Aorta (tissue), 5 donors: ENCODE measurements at regions of chr1 and their contacts with region 1.

Region 1: GRCh38 chr1:222634180-222635013 is 16.5 kb downstream of the MIA3 start:
- DNase-seq: no peak
- ATAC-seq: peak; percentile 74
- H3K4me3 ChIP-seq: no peak overlapping the region
- H3K27ac ChIP-seq: no peak overlapping the region
- H3K4me1 ChIP-seq: no peaks in the 10 kb centered on the region
- H3K27me3 ChIP-seq: no peaks in the 10 kb centered on the region

Region 2: DNA sequence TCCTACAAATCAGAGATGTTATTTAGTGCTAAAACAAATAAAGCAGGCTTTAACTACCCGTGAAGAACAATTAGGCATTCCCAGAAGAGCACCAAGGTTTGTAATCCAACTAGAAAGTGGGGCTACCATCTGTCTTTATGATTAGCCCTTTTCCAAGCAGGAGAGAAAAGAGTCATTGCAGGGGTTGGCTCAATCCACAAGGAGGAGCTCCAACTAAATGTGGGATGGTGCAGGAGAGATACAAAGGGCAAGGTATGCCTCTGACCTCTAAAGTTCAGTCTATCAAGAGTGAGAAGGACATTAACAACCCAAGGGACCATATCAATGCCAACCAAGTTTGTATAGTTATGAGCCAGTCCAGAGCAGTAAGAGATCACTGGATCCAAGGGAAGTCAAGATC is 509.8 kb before region 1 on chr1:
- intact Hi-C with region 1: no loop called
- DNase-seq: no peak
- ATAC-seq: no peak
- H3K4me3 ChIP-seq: no peak overlapping the region
- H3K27ac ChIP-seq: no peak overlapping the region
- H3K4me1 ChIP-seq: no peaks in the 10 kb centered on the region
- H3K27me3 ChIP-seq: no peaks in the 10 kb centered on the region

Region 3: GRCh38 chr1:222465211-222466041 is 169.0 kb before region 1 on chr1:
- intact Hi-C with region 1: loop called (anchors 1 to 2 kb)
- DNase-seq: peak; percentile 97
- ATAC-seq: peak; percentile 100
- H3K4me3 ChIP-seq: peak overlapping the region in 1 of 2 donors; percentile 29
- H3K27ac ChIP-seq: peak overlapping the region in 1 of 2 donors; percentile 64
- H3K4me1 ChIP-seq: no peaks in the 10 kb centered on the region
- H3K27me3 ChIP-seq: no peaks in the 10 kb centered on the region

Region 4: GRCh38 chr1:222589462-222590302 is 44.7 kb before region 1 on chr1 and contains the start of gene TAF1A:
- intact Hi-C with region 1: loop called in 1 of 2 experiments (anchors 10 kb)
- DNase-seq: peak; percentile 93
- ATAC-seq: peak; percentile 95
- H3K4me3 ChIP-seq: peak within 1 kb of the TSS; percentile 89 to 94
- H3K27ac ChIP-seq: peak within 1 kb of the TSS in 1 of 2 donors; percentile 84
- H3K4me1 ChIP-seq: peaks cover 2 to 4% of the 10 kb centered on the region in 2 donors
- H3K27me3 ChIP-seq: no peaks in the 10 kb centered on the region
- total RNA-seq, gene TAF1A: 5.6 to 12.5 TPM

Region 5: GRCh38 chr1:222600281-222600680 is 34.1 kb before region 1 on chr1:
- intact Hi-C with region 1: no loop called
- DNase-seq: no peak
- ATAC-seq: no peak
- H3K4me3 ChIP-seq: no peak overlapping the region
- H3K27ac ChIP-seq: no peak overlapping the region
- H3K4me1 ChIP-seq: no peaks in the 10 kb centered on the region
- H3K27me3 ChIP-seq: no peaks in the 10 kb centered on the region

Region 6: DNA sequence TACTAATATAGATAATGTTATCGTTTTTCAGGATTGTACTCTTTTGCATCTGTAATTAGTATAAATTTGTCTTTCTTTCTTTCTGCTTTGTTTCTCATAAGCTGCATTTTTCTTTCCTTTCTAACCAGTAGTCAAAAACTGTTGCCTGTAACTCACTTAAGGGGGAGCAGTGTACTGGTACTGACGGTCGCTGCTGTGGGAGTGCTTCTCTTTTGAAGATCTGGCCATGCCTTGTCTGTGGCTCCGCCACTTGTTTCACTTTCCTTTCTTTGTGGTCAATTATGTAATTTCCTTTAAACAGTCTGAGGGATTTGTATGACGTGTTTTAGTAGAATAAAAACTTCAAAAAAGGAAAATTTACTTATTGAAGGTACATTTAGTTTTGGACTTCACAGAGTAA is 20.5 kb after region 1 on chr1:
- intact Hi-C with region 1: no loop called
- DNase-seq: peak; percentile 60 to 65
- ATAC-seq: no peak
- H3K4me3 ChIP-seq: no peak overlapping the region
- H3K27ac ChIP-seq: no peak overlapping the region
- H3K4me1 ChIP-seq: peaks cover 0 to 2% of the 10 kb centered on the region in 2 donors
- H3K27me3 ChIP-seq: no peaks in the 10 kb centered on the region